H1 (cell line): ENCODE measurements at regions of chr12 and their contacts with region 1.

Region 1: DNA sequence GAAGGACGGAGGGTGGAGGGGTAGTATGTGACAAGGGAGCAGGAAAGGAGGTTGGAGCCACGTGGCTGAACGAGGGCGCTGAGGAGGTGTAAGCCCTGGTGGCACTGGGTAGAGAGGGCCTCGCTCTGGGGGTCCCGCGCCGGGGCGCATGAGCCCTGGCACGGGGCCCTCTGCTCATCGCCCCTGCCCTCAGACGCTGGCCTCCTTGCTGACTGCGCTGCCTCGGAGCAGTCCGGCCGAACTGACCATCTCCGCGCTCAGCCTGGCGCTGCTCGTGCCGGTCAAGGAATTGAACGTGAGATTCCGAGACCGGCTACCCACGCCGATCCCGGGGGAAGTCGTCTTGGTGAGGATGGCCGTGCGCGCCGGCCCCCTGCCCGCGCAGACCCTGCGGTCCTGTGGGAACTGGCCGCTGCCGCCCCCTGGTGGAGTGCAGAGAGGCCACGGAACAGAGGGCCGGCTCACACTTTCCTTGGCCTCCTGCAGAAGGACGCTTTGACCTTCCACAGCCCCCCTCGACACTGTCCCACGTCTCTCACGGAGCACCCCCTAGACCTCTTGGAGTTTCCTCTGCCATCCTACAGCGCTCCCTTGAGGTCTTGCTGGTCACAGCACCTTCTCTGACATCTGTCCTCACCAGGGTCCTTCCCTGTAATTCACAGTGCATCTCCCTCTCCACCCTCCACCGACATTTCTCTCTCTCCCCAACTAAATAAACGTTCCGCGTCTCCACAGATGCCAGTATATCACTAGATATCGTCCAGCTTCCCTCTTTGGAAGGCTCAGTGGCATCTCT is 10.5 kb downstream of the ARHGEF25 start:
- DNase-seq: peak in 1 of 2 experiments; percentile 87
- H3K4me3 ChIP-seq: peak overlapping the region; percentile 1 to 52 (median 24); a peak in 6 of 8 replicates
- H3K27ac ChIP-seq: no peak overlapping the region
- H3K4me1 ChIP-seq: peaks cover 0 to 20% (median 13%) of the 10 kb centered on the region in 4 experiments; a peak in 6 of 7 replicates
- H3K27me3 ChIP-seq: peaks cover 86 to 98% (median 98%) of the 10 kb centered on the region in 4 experiments
- CTCF ChIP-seq: peak in 2 of 3 experiments; percentile 83 to 89; a peak in 3 of 4 replicates
- EP300 ChIP-seq: no peak
- POLR2A ChIP-seq: no peak
- RAD21 ChIP-seq: peak; percentile 62 to 71

Region 2: DNA sequence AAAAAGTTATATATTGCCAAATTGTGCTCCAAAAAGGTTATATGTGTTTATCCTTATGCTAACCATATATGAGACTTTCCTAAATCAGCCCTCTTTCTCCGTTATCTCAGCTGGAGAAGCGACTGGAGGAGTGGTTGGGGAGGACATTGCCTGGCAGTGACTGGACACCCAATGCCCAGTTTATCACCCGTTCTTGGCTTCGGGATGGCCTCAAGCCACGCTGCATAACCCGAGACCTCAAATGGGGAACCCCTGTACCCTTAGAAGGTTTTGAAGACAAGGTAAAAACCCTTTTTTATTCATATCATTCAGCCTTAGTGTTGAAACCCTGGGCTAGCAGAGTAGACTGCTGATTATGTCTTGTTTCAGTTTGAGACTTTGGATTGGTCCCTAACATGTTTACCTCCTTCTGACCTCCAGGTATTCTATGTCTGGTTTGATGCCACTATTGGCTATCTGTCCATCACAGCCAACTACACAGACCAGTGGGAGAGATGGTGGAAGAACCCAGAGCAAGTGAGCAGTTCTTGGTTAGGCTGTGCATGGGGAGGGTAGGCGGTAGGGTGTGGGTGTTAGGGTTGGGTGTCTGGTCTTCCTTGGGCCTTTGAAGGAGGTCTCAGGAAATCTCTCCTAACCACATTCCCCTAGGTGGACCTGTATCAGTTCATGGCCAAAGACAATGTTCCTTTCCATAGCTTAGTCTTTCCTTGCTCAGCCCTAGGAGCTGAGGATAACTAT is 109.9 kb before region 1 on chr12:
- CTCF ChIA-PET with region 1: no interaction called
- POLR2A ChIA-PET with region 1: no interaction called
- DNase-seq: no peak
- H3K4me3 ChIP-seq: no peak overlapping the region
- H3K27ac ChIP-seq: no peak overlapping the region
- H3K4me1 ChIP-seq: no peaks in the 10 kb centered on the region
- H3K27me3 ChIP-seq: no peaks in the 10 kb centered on the region
- CTCF ChIP-seq: no peak
- EP300 ChIP-seq: no peak
- POLR2A ChIP-seq: no peak
- RAD21 ChIP-seq: no peak

Region 3: GRCh38 chr12:57576613-57577160 is 45.0 kb before region 1 on chr12:
- CTCF ChIA-PET with region 1: interaction called, 201 read pairs
- POLR2A ChIA-PET with region 1: no interaction called
- DNase-seq: no peak
- H3K4me3 ChIP-seq: no peak overlapping the region
- H3K27ac ChIP-seq: no peak overlapping the region
- H3K4me1 ChIP-seq: no peaks in the 10 kb centered on the region
- H3K27me3 ChIP-seq: no peaks in the 10 kb centered on the region
- CTCF ChIP-seq: no peak
- EP300 ChIP-seq: no peak
- POLR2A ChIP-seq: no peak
- RAD21 ChIP-seq: no peak

Region 4: GRCh38 chr12:57590536-57591479 is 30.9 kb before region 1 on chr12 and contains the start of gene PIP4K2C:
- CTCF ChIA-PET with region 1: interaction called, 201 read pairs
- POLR2A ChIA-PET with region 1: interaction called, 12 read pairs
- DNase-seq: peak; percentile 81 to 90
- H3K4me3 ChIP-seq: peak within 1 kb of the TSS; percentile 72 to 95 (median 80)
- H3K27ac ChIP-seq: peak within 1 kb of the TSS; percentile 26; the same call in 1 of the 2 replicates
- H3K4me1 ChIP-seq: peaks cover 2 to 7% (median 3%) of the 10 kb centered on the region in 4 experiments; a peak in 6 of 7 replicates
- H3K27me3 ChIP-seq: no peaks in the 10 kb centered on the region
- CTCF ChIP-seq: no peak; a peak in 1 of 4 replicates
- EP300 ChIP-seq: no peak
- POLR2A ChIP-seq: peak; percentile 42 to 67
- RAD21 ChIP-seq: no peak; a peak in 1 of 4 replicates
- total RNA-seq, gene PIP4K2C: 21.4 and 27.1 TPM in 2 replicates

Region 5: GRCh38 chr12:57604454-57604991 is 17.2 kb before region 1 on chr12 and contains the start of gene DTX3:
- CTCF ChIA-PET with region 1: interaction called, 40 read pairs
- POLR2A ChIA-PET with region 1: interaction called, 45 read pairs
- DNase-seq: peak in 1 of 2 experiments; percentile 70
- H3K4me3 ChIP-seq: peak within 1 kb of the TSS; percentile 53 to 84 (median 78)
- H3K27ac ChIP-seq: peak within 1 kb of the TSS; percentile 93
- H3K4me1 ChIP-seq: peaks cover 7 to 11% (median 9%) of the 10 kb centered on the region in 4 experiments
- H3K27me3 ChIP-seq: 0 out of 7 replicates have a peak, but pooled peaks cover 0 to 4% (median 0%) of the 10 kb centered on the region in 4 experiments
- CTCF ChIP-seq: no peak
- EP300 ChIP-seq: no peak
- POLR2A ChIP-seq: peak in 1 of 2 experiments; percentile 18; a peak in 1 of 3 replicates
- RAD21 ChIP-seq: no peak
- total RNA-seq, gene DTX3: 41.8 and 43.4 TPM in 2 replicates

Region 6: GRCh38 chr12:57611108-57611809 is 10.4 kb before region 1 on chr12 and contains the start of gene ARHGEF25:
- CTCF ChIA-PET with region 1: interaction called, 40 read pairs
- POLR2A ChIA-PET with region 1: interaction called, 45 read pairs
- DNase-seq: peak in 1 of 2 experiments; percentile 83
- H3K4me3 ChIP-seq: peak within 1 kb of the TSS; percentile 50 to 73 (median 56)
- H3K27ac ChIP-seq: no peak within 1 kb of the TSS
- H3K4me1 ChIP-seq: peaks cover 8 to 17% (median 12%) of the 10 kb centered on the region in 4 experiments
- H3K27me3 ChIP-seq: peaks cover 4 to 59% (median 47%) of the 10 kb centered on the region in 4 experiments
- CTCF ChIP-seq: no peak
- EP300 ChIP-seq: no peak
- POLR2A ChIP-seq: no peak
- RAD21 ChIP-seq: no peak
- total RNA-seq, gene ARHGEF25: 5.9 and 6.4 TPM in 2 replicates

Region 7: GRCh38 chr12:57632694-57633477 is 11.2 kb after region 1 on chr12 and contains the start of gene B4GALNT1:
- CTCF ChIA-PET with region 1: interaction called, 68 read pairs
- POLR2A ChIA-PET with region 1: interaction called, 11 read pairs
- DNase-seq: peak in 1 of 2 experiments; percentile 85
- H3K4me3 ChIP-seq: peak within 1 kb of the TSS; percentile 43 to 83 (median 54)
- H3K27ac ChIP-seq: no peak within 1 kb of the TSS
- H3K4me1 ChIP-seq: peaks cover 0 to 13% (median 9%) of the 10 kb centered on the region in 4 experiments; a peak in 6 of 7 replicates
- H3K27me3 ChIP-seq: peaks cover 49 to 68% (median 63%) of the 10 kb centered on the region in 4 experiments
- CTCF ChIP-seq: peak in 2 of 3 experiments; percentile 84 to 90; a peak in 3 of 4 replicates
- EP300 ChIP-seq: no peak
- POLR2A ChIP-seq: no peak
- RAD21 ChIP-seq: peak; percentile 44 to 58; a peak in 3 of 4 replicates
- total RNA-seq, gene B4GALNT1: 1.4 and 1.5 TPM in 2 replicates

Region 8: GRCh38 chr12:57735952-57736740 is 114.5 kb after region 1 on chr12:
- CTCF ChIA-PET with region 1: interaction called, 21 read pairs
- POLR2A ChIA-PET with region 1: interaction called, 5 read pairs
- DNase-seq: peak in 1 of 2 experiments; percentile 80
- H3K4me3 ChIP-seq: peak overlapping the region; percentile 19 to 76 (median 30)
- H3K27ac ChIP-seq: no peak overlapping the region
- H3K4me1 ChIP-seq: peaks cover 6 to 29% (median 12%) of the 10 kb centered on the region in 4 experiments; a peak in 6 of 7 replicates
- H3K27me3 ChIP-seq: peaks cover 50 to 97% (median 90%) of the 10 kb centered on the region in 4 experiments
- CTCF ChIP-seq: peak; percentile 60 to 66 (median 64)
- EP300 ChIP-seq: 0 out of 3 replicates have a peak, but pooled peaks of 1 of the 2 experiments have one; percentile 52
- POLR2A ChIP-seq: no peak
- RAD21 ChIP-seq: peak; percentile 73 to 77